Astrocyte of the cerebellum (primary cell): ENCODE measurements at regions of chr21 and their contacts with region 1.

Region 1: DNA sequence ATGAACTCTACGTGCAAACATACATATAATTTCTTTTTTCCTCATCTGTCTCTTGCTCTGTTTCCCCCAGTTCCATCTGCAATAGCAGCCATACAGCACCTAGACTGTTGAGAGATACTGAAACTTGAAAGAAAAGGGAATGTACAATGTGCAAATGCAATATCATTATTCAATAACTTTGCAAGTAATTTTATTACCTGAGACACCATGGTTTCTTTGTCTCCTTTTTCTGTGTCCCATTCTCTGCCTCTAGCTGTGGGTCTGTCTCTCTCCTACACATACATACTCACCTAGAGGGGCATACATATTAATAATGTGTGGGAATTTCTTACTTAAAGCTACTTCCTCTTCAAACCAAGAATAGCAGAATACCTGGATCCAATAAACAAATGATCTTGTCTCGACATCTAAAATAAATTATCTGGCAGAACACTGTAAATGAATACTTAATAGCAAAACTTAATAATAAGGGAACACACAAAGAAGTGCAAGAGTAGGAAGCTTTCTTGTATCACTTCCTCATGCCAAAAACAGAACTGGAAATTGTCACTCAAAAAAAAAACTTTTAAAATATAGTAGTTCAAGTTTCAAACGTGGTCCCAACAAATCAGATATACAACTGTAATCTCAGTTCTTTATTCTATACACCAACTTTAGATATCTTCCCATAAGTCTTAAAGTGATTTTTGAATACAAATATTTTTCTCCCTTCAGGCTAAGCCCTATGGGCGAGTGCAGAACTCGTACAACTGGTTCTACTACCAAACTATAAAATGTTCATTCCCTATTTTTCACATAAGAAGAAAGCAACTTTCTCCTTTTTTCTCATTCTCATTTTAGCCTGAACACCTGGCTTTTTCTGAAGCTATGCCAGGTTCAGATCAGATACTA is 194.6 kb downstream of the NRIP1 start:
- DNase-seq: no peak
- H3K4me3 ChIP-seq: no peak overlapping the region
- CTCF ChIP-seq: no peak

Region 2: GRCh38 chr21:14825514-14825974 is 44.7 kb before region 1 on chr21:
- in situ Hi-C with region 1: no loop called
- DNase-seq: no peak
- H3K4me3 ChIP-seq: no peak overlapping the region
- CTCF ChIP-seq: no peak

Region 3: DNA sequence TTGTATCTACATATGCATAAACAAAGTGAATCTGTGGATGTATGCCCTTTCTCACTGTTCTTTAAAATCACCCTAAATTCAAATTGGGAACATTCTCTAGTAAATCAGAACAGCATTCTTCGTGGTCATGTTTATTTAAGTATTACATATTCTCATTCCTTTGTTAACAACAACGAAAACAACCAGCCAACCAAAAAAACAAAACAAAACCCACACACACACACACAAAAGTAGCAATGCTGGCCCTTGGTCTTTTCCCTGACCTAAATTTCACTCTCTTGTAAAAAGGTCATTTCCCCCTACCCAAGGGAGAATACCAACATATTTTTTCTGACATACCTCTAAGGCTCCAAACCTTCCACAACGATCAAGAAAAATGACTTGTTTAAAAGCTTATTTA is 92.0 kb after region 1 on chr21:
- in situ Hi-C with region 1: loop called (anchors 5 kb)
- DNase-seq: no peak
- H3K4me3 ChIP-seq: no peak overlapping the region
- CTCF ChIP-seq: no peak